Activated T-helper 1 cell treated with anti-CD3 and anti-CD28 coated beads, Interleukin-12 subunit alpha, Interleukin-12 subunit beta, Interleukin-2, Interleukin-4 antibody, amounts not matched to agents 30 ng/mL and 10 ng/mL and 1 ng/mL, durations not matched to agents 14 hours and 24 hours and 36 hours (primary cell): ENCODE measurements at regions of chr6 and their contacts with region 1.

Region 1: GRCh38 chr6:12033770-12034169 is 21.7 kb downstream of the HIVEP1 start:
- DNase-seq: no peak
- H3K4me3 Mint-ChIP-seq: no peak overlapping the region
- H3K27ac Mint-ChIP-seq: no peak overlapping the region
- H3K4me1 Mint-ChIP-seq: peaks cover 71% of the 10 kb centered on the region
- H3K27me3 Mint-ChIP-seq: no peaks in the 10 kb centered on the region

Region 2: GRCh38 chr6:12060780-12061619 is 27.2 kb after region 1 on chr6:
- intact Hi-C with region 1: loop called (anchors 5 kb)
- DNase-seq: peak; percentile 71
- H3K4me3 Mint-ChIP-seq: peak overlapping the region; percentile 83
- H3K27ac Mint-ChIP-seq: peak overlapping the region; percentile 94
- H3K4me1 Mint-ChIP-seq: peaks cover 78% of the 10 kb centered on the region
- H3K27me3 Mint-ChIP-seq: no peaks in the 10 kb centered on the region